Colonic mucosa (tissue), 4 donors: ENCODE measurements at regions of chr15 and their contacts with region 1.

Region 1: DNA sequence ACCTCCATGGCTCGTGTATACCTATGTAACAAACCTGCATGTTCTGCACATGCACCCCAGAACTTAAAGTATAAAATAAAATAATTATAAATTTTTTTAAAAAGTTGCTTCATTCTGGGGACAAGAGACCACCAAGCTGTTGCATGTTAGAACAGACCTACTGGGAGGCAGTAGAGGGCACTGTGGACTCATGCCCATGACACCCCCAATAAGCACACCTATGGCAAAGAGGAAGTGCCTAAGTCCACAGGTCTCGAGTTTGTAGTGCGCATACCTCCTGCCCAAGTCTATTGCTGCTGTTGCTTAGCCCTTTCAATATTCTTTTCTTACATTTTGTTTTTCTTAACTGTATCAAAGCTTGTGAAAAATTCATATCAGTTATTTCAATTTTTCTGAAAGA is 267.9 kb upstream of the THBS1 start:
- DNase-seq: peak; percentile 78
- H3K4me3 ChIP-seq: no peak overlapping the region
- H3K27ac ChIP-seq: peak overlapping the region; percentile 60
- H3K4me1 ChIP-seq: peaks cover 6% of the 10 kb centered on the region
- H3K27me3 ChIP-seq: no peaks in the 10 kb centered on the region
- CTCF ChIP-seq: peak; percentile 61

Region 2: DNA sequence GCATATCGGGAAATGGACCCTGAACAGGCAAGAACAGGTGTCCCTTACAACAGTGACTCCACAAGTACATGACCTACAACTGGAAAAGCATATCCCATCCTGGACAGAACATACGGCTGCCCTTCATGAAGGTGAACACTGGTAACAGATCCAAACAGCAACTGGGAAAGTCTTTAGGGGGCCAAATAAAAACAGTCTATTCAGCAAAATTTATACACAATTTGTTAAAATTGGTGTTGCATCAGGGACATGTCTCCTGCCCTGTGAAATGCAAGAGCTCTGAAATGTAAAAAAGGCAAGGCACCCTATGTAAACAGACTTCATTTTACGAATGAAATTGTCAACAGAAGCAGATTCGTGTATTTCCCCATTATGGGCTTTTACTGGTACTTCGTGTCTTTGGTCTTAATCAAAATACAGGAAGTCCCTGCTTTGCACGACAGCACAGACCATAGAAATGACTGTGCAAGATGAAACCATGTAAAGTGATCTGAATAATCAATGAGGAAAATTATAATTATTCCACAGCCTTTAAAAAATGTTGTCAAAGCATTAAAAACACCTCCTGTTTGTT is 140.6 kb after region 1 on chr15:
- intact Hi-C with region 1: loop called (anchors 5 kb)
- DNase-seq: no peak
- H3K4me3 ChIP-seq: no peak overlapping the region
- H3K27ac ChIP-seq: no peak overlapping the region
- H3K4me1 ChIP-seq: no peaks in the 10 kb centered on the region
- H3K27me3 ChIP-seq: no peaks in the 10 kb centered on the region
- CTCF ChIP-seq: no peak